Esophagus muscularis mucosa (tissue), 4 donors: ENCODE measurements at regions of chr2 and their contacts with region 1.

Region 1: GRCh38 chr2:86623651-86624541 is at the start of gene RNF103:
- DNase-seq: peak; percentile 99
- H3K4me3 ChIP-seq: peak within 1 kb of the TSS; percentile 68 to 89 (median 72)
- H3K27ac ChIP-seq: peak within 1 kb of the TSS; percentile 93 to 99 (median 96)
- H3K4me1 ChIP-seq: peaks cover 20 to 31% (median 27%) of the 10 kb centered on the region in 4 donors
- H3K27me3 ChIP-seq: no peaks in the 10 kb centered on the region
- CTCF ChIP-seq: no peak
- EP300 ChIP-seq: no peak
- POLR2A ChIP-seq: peak; percentile 89
- total RNA-seq, gene RNF103: 36.9 to 60.4 (median 46.4) TPM

Region 2: DNA sequence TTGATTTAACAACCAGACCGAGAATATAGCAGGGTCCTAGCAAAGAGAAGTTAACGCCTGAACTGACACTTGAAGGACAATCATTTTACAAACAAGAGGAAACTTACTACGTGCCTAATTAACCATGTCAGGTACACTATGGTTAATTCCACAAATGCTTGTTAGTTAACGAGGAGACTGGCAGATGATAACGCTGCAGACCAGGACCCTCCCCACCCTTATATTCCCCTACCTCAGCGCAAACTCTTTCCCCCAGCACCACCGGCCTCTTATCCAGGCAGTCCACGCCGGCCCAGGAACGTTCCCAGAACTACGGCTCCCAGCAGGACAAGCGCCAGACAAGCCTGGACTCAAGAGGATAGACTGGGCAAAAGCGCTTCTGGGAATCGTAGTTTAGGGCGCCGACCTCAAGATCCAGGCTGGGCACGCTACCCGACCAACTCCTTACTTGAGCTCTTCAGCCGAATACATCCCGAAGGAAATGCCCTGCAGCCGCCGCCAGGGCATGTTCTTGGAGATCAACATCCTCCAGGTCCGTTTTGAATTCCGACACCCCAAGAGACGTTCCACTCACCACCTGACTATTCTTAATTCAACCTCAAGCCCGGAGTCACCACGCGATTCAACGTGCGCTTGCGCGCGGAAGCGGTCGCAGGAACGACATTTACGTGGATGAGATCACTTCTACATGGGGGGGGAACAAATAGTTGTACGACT is 518.5 kb before region 1 on chr2 and contains the start of gene POLR1A:
- intact Hi-C with region 1: loop called (anchors 5 kb)
- DNase-seq: peak; percentile 98
- H3K4me3 ChIP-seq: peak within 1 kb of the TSS; percentile 71 to 85 (median 85)
- H3K27ac ChIP-seq: peak within 1 kb of the TSS; percentile 74 to 89 (median 86)
- H3K4me1 ChIP-seq: peaks cover 30 to 47% (median 42%) of the 10 kb centered on the region in 4 donors
- H3K27me3 ChIP-seq: no peaks in the 10 kb centered on the region
- CTCF ChIP-seq: no peak
- EP300 ChIP-seq: no peak
- POLR2A ChIP-seq: no peak
- total RNA-seq, gene POLR1A: 13.3 to 22.4 (median 16.6) TPM

Region 3: DNA sequence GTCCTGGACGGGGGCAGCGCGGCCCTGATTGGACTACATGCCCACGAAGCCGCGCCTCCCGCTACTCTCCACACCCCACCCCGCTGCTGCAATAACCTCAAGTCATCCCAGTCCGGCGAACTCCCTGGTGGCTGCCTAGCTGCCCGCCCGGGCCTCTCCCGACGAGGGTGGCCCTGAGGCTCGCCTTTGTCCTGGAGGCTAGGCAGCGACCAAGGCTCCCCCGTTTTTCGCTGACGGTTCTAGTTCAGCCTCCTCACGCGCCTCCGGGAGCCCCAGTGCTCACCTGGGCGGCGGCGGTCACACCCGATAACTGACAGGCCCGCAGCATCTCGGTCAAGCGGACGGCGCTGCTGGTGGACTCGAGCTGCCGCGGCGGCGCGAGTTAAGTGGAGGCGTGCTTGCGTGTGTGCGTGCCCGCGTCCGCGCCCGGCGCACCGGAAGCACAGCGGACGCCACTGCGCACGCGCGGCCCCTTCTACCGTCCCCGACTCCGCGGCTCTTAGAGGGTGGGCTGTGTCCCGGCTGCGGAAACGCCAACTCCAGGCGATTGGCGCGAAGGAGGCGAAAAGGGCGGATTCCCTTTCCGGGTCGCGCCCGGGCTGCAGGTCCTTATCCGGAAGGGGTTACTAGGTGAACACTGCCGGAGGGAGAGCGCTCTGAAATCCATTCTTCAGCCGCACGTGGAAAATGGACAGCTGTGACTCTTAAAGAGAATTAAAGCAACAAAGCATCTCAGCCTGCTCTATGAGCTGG is 428.7 kb before region 1 on chr2 and contains the start of gene IMMT:
- intact Hi-C with region 1: loop called (anchors 5 kb)
- DNase-seq: peak; percentile 99
- H3K4me3 ChIP-seq: peak within 1 kb of the TSS; percentile 64 to 100 (median 97)
- H3K27ac ChIP-seq: peak within 1 kb of the TSS; percentile 94 to 100 (median 100)
- H3K4me1 ChIP-seq: peaks cover 46 to 66% (median 63%) of the 10 kb centered on the region in 4 donors
- H3K27me3 ChIP-seq: no peaks in the 10 kb centered on the region
- CTCF ChIP-seq: no peak
- EP300 ChIP-seq: no peak
- POLR2A ChIP-seq: peak; percentile 88
- total RNA-seq, gene IMMT: 53.5 to 68.1 (median 66.6) TPM

Region 4: DNA sequence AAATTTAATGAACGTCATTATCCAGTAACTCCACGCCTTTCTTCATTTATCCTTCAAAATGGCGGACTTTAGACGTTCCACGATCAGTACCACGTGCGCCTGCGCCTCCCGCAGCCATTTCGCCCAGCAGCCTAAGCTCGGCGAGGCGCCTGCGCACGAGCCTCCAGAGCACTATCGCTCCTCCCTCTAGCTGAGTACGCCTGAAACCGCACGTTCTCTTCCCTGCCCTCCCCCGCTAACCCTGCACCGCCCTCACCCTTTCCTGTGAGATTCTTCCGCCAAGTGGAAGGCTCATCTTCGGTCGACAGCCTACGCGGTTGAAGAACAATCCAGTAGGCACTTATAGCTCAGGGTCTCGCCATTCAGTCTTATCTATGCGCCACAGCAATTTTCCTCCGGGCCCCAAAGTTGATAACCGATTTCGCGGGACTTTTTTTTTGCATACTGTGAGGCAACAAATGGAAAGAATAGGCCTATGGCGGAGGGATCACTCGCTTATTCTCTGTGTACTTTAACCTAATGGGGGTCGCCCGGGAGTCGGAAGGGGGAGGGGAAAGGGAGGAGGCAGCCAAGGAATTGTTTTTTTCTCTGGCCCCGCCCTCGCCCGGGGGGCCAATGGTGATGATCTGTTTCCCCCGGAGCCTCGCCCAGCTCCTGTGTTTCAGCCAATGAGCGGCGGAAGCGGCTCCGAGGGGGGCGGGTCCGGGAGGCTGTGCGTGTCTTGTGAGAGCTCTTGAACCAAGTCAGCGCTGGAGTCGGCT is 183.1 kb before region 1 on chr2 and contains the start of gene KDM3A:
- intact Hi-C with region 1: loop called (anchors 5 kb)
- DNase-seq: peak; percentile 100
- H3K4me3 ChIP-seq: peak within 1 kb of the TSS; percentile 79 to 90 (median 84)
- H3K27ac ChIP-seq: peak within 1 kb of the TSS; percentile 95 to 99 (median 96)
- H3K4me1 ChIP-seq: peaks cover 29 to 31% (median 30%) of the 10 kb centered on the region in 4 donors
- H3K27me3 ChIP-seq: no peaks in the 10 kb centered on the region
- CTCF ChIP-seq: no peak
- EP300 ChIP-seq: no peak
- POLR2A ChIP-seq: peak; percentile 69
- total RNA-seq, gene KDM3A: 37.3 to 68.6 (median 52.0) TPM

Region 5: DNA sequence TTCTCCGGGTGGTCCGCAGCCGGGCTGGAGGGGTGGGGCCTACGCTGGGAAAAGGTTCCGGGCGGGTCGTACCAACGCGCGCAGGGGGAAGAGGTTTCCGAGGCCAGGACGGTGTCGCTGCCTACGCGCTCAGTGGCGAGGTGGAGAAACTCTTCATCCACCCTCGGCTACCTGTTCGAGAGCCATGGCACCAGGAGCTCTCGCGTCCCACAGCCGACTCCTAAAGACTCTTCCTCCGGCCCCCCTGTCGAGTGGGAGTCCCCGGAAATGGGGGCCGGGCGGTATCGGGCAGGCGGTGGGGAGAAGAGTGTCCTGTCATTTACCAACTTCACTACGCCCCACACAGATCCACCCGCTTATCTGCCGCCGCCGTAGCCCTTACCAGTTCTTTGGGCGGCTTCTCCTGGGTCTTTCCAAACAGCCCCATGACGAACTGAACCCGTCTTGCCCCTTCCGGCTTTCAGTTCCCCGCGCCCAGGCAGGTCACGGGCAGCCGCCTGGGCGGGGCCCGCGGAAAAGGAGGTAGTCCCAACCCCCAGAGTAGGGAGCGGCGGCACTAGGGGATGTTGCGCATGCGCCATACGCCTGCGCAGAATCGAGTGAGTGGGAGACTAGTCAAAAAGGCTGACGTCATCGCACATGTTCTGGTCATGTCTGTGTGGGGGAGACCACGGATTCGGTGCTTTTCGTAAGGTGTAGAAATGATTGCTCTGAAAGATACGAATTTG is 60.8 kb before region 1 on chr2 and contains the start of gene CHMP3:
- intact Hi-C with region 1: loop called (anchors 2 kb)
- DNase-seq: peak; percentile 98
- H3K4me3 ChIP-seq: peak within 1 kb of the TSS; percentile 70 to 89 (median 80)
- H3K27ac ChIP-seq: peak within 1 kb of the TSS; percentile 96 to 99 (median 97)
- H3K4me1 ChIP-seq: peaks cover 27 to 48% (median 46%) of the 10 kb centered on the region in 4 donors
- H3K27me3 ChIP-seq: no peaks in the 10 kb centered on the region
- CTCF ChIP-seq: no peak
- EP300 ChIP-seq: no peak
- POLR2A ChIP-seq: peak; percentile 39
- total RNA-seq, gene CHMP3: 166 to 213 (median 185) TPM